Motor neuron (in vitro differentiated cells): ENCODE measurements at regions of chr9 and their contacts with region 1.

Region 1: DNA sequence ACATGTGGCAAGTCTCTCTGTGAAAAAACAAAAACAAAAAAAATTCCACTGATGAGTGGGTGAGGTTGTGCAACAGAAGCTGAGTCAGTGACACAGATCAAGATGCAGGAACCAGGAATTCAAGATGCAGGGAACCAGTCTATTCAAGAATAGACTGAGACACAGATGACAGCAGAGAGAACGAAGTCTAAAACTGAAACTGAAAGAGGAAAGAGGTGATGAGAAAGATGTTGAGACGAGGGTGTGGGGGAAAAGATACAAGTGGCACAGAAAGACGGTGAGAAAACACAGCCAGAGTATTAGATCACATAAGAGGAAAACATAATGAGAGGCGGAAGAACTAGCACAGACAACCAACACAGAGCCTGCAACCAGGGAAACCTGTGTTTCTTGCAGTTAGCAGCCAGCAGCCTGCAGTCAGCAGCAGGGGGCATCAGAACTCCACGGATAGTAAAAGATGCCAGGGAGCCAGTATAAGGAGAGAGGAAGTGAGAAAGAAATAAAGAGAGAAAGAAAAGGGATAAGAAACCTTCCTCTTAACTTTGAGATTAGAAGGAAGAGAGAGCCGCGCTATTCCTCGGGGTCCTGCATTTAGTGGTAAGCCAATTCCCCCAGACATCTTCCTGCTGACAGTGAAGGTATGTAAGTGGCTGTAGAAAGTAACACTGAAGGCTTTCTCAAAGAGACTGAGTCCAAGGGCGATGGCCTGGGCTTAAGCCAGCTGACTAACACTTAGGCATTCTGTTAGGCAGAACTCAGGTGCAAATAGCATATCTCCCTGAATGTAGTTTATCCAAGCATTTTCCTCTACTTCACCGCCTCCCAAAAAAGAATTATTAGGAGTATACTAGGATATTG is 79.0 kb downstream of the TLR4 start:
- ATAC-seq: peak; percentile 93 to 100 (median 99)
- H3K4me3 ChIP-seq: peak overlapping the region in 2 of 5 donors; percentile 15 to 21
- H3K27ac ChIP-seq: no peak overlapping the region
- H3K4me1 ChIP-seq: peaks cover 3 to 6% of the 10 kb centered on the region in 2 donors

Region 2: GRCh38 chr9:118170032-118170955 is 387.1 kb after region 1 on chr9:
- in situ Hi-C with region 1: loop called in 1 of 9 experiments (anchors 25 kb)
- ATAC-seq: peak; percentile 69 to 98 (median 88)
- H3K4me3 ChIP-seq: no peak overlapping the region
- H3K27ac ChIP-seq: no peak overlapping the region
- H3K4me1 ChIP-seq: peaks cover 4 to 5% of the 10 kb centered on the region in 2 donors

Region 3: DNA sequence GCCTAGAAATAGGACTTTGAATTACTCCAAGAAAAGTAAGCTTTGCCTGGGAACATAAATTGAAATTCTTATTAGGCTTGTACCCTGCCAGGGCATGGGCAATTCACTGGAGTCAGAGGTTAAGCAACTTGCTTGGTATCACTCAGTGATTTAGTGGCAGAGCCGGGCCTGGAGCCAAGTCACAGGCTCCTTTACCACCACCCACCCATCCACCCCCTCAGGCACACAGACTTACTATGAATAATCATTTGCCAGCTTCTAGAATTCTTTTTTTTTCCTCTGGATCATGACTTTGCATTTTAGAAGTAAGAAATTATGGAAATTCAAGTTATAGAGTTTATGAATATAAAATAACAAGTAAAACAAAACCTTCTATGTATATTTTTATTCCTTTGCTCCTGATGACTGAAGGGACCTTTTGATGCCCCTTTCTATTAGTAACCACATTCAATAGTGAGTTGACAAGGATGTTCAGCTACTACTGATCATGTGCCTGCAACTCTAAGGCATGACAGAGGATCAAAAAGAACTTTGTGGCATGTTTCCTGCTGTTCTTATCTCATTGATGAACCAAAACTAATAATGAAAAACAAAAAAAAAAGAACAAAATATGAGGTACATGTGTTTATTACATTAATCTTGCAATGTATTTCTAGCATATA is 535.7 kb after region 1 on chr9:
- in situ Hi-C with region 1: loop called in 1 of 9 experiments (anchors 25 kb)
- ATAC-seq: peak in 4 of 8 experiments; percentile 51 to 80 (median 71)
- H3K4me3 ChIP-seq: no peak overlapping the region
- H3K27ac ChIP-seq: no peak overlapping the region
- H3K4me1 ChIP-seq: peaks cover 0 to 2% of the 10 kb centered on the region in 2 donors